MCF 10A (cell line): ENCODE measurements at regions of chr12 and their contacts with region 1.

Region 1: DNA sequence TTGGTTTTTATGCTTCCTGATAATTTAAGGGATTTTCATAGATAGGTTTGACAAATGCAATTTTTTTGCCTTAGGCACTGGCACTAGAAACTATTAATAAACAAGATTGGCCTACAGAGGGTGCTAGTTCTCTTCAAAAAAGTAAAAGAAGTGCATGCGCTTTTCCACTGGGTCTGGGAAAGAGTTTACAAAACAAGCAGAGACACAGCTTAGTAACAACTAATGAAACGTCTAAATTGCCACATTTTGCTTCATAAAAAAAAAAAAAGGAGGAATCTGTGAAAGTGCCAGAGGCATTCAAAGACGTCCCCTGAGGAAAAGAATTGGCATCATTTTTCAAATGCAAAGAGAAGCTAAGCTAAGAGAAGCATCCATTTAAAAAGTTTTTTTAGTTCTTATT is 58.3 kb upstream of the EEA1 start:
- DNase-seq: peak; percentile 77
- H3K4me3 Mint-ChIP-seq: no peak overlapping the region
- H3K27ac Mint-ChIP-seq: no peak overlapping the region
- H3K4me1 Mint-ChIP-seq: peaks cover 5% of the 10 kb centered on the region
- H3K27me3 Mint-ChIP-seq: no peaks in the 10 kb centered on the region
- CTCF ChIP-seq: peak; percentile 61

Region 2: DNA sequence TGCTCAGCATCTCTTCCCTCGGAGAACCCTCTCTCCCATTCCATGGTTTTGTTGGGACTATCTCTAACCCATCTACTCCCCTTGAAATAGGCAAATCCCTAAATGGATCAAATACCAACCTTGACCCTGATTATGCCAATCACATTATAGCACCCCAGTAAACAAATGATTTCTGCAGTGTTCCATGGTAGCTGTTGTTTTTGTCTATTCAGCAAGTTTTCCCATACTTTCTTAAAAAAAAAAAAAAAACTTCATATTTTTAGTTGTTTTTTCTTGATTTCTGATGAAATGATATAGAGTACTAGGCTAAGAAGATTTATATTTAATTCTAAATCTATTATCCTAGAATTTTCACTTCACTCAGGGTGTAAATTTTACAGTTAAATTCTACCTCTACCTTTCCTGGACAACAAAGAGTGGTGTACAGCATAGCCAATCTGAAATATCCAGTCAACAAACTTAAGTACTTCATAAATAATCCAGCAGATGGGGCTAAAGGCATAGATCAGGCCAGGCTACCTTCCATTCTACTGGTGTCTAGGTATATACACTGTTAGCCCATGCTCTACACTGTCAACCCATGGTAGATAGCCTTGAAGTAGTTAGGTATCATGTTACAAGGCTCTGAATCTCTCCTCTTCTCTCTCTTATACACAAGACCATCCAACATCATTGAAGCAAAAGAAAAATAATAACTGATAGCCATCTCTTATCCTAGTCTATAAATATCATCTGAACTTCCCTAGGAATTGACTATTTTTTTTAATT is 202.4 kb before region 1 on chr12:
- CTCF ChIA-PET with region 1: interaction called, 5 read pairs
- POLR2A ChIA-PET with region 1: interaction called, 3 read pairs
- intact Hi-C with region 1: loop called (anchors 1 kb)
- DNase-seq: peak; percentile 80
- H3K4me3 Mint-ChIP-seq: peak overlapping the region; percentile 37
- H3K27ac Mint-ChIP-seq: peak overlapping the region; percentile 98
- H3K4me1 Mint-ChIP-seq: peaks cover 30% of the 10 kb centered on the region
- H3K27me3 Mint-ChIP-seq: no peaks in the 10 kb centered on the region
- CTCF ChIP-seq: peak; percentile 49

Region 3: GRCh38 chr12:92973601-92974000 is 13.8 kb before region 1 on chr12:
- CTCF ChIA-PET with region 1: interaction called, 43 read pairs
- POLR2A ChIA-PET with region 1: interaction called, 10 read pairs
- intact Hi-C with region 1: no loop called
- DNase-seq: peak; percentile 97
- H3K4me3 Mint-ChIP-seq: peak overlapping the region; percentile 51
- H3K27ac Mint-ChIP-seq: peak overlapping the region; percentile 94
- H3K4me1 Mint-ChIP-seq: peaks cover 25% of the 10 kb centered on the region
- H3K27me3 Mint-ChIP-seq: no peaks in the 10 kb centered on the region
- CTCF ChIP-seq: no peak

Region 4: DNA sequence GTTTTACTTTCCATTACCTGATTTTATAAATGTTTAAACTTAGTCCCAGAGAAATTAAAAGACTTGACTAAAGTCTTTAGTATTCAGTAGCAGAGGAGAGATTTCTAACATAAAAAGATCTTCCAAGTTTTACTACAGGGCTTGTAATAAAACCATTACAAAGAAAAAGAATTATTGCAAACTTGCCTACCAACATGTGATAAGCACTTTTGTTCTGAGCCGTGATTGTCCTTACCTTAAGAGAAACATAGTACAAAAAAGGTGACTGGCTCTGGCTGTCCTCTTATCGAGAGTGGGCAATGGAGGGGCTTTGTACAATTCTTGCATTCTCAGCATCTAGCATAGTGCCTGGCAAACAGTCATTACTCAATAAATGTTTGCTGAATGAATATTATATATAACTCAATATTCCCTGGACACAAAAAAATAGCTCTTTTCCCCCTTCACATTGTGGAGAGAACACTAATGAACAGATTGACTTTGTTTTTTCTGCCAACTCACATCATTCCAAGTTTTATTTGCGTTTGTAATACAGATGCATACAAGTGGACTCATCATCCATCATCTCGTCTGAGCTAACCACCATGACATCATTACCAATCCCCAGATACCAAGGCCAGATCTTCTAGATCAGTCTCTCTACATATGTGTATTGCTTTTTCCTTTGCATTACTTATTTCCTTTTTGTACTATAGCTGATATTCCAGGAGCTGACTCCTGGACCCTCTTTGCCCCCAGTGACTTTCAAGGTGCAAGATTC is 134.5 kb after region 1 on chr12:
- CTCF ChIA-PET with region 1: interaction called, 15 read pairs
- POLR2A ChIA-PET with region 1: interaction called, 7 read pairs
- intact Hi-C with region 1: loop called (anchors 1 kb)
- DNase-seq: peak; percentile 48
- H3K4me3 Mint-ChIP-seq: peak overlapping the region; percentile 24
- H3K27ac Mint-ChIP-seq: peak overlapping the region; percentile 94
- H3K4me1 Mint-ChIP-seq: peaks cover 27% of the 10 kb centered on the region
- H3K27me3 Mint-ChIP-seq: no peaks in the 10 kb centered on the region
- CTCF ChIP-seq: no peak

Region 5: DNA sequence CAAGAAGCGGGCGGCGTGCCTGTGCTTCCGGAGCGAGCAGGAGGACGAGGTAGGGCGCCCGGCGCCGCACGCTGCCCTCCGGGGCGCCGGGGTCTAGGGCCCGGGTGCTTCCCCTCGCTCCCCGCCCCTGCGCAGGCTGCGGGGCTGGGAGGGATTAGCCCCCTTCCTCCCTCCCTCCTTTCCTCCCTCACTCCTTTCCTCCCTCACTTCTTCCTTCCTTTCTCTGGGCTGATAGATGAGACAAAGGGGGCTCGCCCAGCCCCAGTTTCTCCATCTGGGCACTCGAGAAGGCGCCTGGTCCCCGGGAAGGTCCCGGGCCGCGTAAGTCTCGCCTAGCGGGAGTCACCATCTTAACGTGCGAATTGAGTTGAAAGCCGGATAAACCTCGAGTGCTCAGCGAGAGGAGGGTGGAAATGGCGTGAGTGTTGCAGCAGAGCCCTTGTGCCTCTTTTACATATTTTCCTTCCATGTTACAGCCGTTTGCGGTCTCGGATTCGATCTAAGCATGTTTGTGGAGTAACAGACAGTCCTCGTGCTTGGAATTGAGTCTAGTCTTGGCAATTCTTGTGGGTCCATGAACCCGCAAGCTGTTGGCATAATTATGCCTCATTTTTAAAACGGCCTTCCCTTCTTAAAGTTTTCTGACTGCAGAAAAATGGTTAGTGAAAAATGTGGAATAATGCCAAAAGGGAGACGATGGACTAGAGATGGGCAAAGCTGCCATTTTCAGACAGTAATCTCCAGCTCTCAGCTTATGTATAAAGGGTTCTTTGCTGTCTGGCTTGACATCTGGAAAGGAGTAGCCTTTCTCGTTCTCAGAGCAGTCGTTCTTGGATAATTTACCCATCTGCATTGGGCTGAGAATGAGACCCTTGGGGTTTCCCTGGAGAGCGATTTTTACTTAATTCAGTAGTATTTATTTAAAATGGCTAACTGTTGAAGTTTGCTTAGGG is 391.3 kb after region 1 on chr12:
- CTCF ChIA-PET with region 1: interaction called, 64 read pairs
- POLR2A ChIA-PET with region 1: interaction called, 24 read pairs
- intact Hi-C with region 1: loop called (anchors 1 kb)
- DNase-seq: peak; percentile 64
- H3K4me3 Mint-ChIP-seq: peak overlapping the region; percentile 98
- H3K27ac Mint-ChIP-seq: peak overlapping the region; percentile 50
- H3K4me1 Mint-ChIP-seq: peaks cover 24% of the 10 kb centered on the region
- H3K27me3 Mint-ChIP-seq: no peaks in the 10 kb centered on the region
- CTCF ChIP-seq: no peak

Region 6: GRCh38 chr12:93419388-93420034 is 432.1 kb after region 1 on chr12:
- CTCF ChIA-PET with region 1: interaction called, 31 read pairs
- POLR2A ChIA-PET with region 1: interaction called, 3 read pairs
- intact Hi-C with region 1: loop called (anchors 1 kb)
- DNase-seq: peak; percentile 49
- H3K4me3 Mint-ChIP-seq: no peak overlapping the region
- H3K27ac Mint-ChIP-seq: no peak overlapping the region
- H3K4me1 Mint-ChIP-seq: peaks cover 32% of the 10 kb centered on the region
- H3K27me3 Mint-ChIP-seq: no peaks in the 10 kb centered on the region
- CTCF ChIP-seq: peak; percentile 43